Activated T-helper 2 cell treated with anti-CD3 and anti-CD28 coated beads, Interferon-gamma antibody, Interleukin-2, Interleukin-4, amounts not matched to agents 10 μg/mL and 5 μg/mL and 100 μg/mL, durations not matched to agents 14 hours and 24 hours and 36 hours (primary cell): ENCODE measurements at regions of chr11 and their contacts with region 1.

Region 1: GRCh38 chr11:777288-778255 is at the start of gene GATD1:
- DNase-seq: peak; percentile 93
- H3K4me3 Mint-ChIP-seq: peak within 1 kb of the TSS; percentile 88
- H3K27ac Mint-ChIP-seq: peak within 1 kb of the TSS; percentile 81
- H3K4me1 Mint-ChIP-seq: peaks cover 19% of the 10 kb centered on the region
- H3K27me3 Mint-ChIP-seq: no peaks in the 10 kb centered on the region
- total RNA-seq, gene GATD1: 68.0 and 75.2 TPM in 2 replicates

Region 2: GRCh38 chr11:747158-748006 is 30.2 kb before region 1 on chr11 and contains the start of gene TALDO1:
- intact Hi-C with region 1: loop called (anchors 2 kb)
- DNase-seq: peak; percentile 84
- H3K4me3 Mint-ChIP-seq: peak within 1 kb of the TSS; percentile 85
- H3K27ac Mint-ChIP-seq: peak within 1 kb of the TSS; percentile 77
- H3K4me1 Mint-ChIP-seq: peaks cover 18% of the 10 kb centered on the region
- H3K27me3 Mint-ChIP-seq: no peaks in the 10 kb centered on the region
- total RNA-seq, gene TALDO1: 270 and 275 TPM in 2 replicates